ENCODE measurements at regions of chr15 and their contacts with region 1.

Region 1: GRCh38 chr15:81265944-81266775 is 57.8 kb downstream of the STARD5 start:
- DNase-seq: peak; percentile 92
- ATAC-seq: peak; percentile 93
- H3K4me3 Mint-ChIP-seq: peak overlapping the region; percentile 53
- H3K27ac Mint-ChIP-seq: peak overlapping the region; percentile 75
- H3K4me1 Mint-ChIP-seq: peaks cover 37% of the 10 kb centered on the region
- H3K27me3 Mint-ChIP-seq: peaks cover 2% of the 10 kb centered on the region

Region 2: DNA sequence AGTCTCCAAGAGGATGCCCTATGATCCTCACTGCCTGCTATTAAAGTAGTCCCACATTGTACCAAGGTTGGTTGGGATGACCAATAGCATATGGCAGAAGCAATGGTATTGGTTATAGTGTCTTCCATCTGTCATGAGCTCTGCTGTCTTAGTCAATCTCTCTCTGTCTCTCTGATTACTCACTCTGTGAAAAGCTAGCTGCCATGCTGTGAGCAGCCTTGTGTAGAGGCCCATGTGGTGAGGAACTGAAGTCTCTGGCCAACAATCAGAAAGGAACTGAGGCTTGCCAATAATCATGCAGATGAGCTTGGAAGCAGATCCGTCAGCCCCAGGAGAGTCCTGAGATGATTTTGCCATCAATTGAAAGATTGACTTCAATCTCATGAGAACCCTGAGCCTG is 192.4 kb before region 1 on chr15:
- CTCF ChIA-PET with region 1: interaction called, 12 read pairs
- POLR2A ChIA-PET with region 1: no interaction called
- intact Hi-C with region 1: no loop called
- DNase-seq: no peak
- ATAC-seq: peak; percentile 71
- H3K4me3 Mint-ChIP-seq: no peak overlapping the region
- H3K27ac Mint-ChIP-seq: no peak overlapping the region
- H3K4me1 Mint-ChIP-seq: no peaks in the 10 kb centered on the region
- H3K27me3 Mint-ChIP-seq: no peaks in the 10 kb centered on the region

Region 3: GRCh38 chr15:81155375-81156218 is 110.6 kb before region 1 on chr15:
- CTCF ChIA-PET with region 1: interaction called, 90 read pairs
- POLR2A ChIA-PET with region 1: interaction called, 3 read pairs
- intact Hi-C with region 1: loop called (anchors 1 kb)
- DNase-seq: peak; percentile 18
- ATAC-seq: peak; percentile 33
- H3K4me3 Mint-ChIP-seq: no peak overlapping the region
- H3K27ac Mint-ChIP-seq: no peak overlapping the region
- H3K4me1 Mint-ChIP-seq: peaks cover 3% of the 10 kb centered on the region
- H3K27me3 Mint-ChIP-seq: peaks cover 7% of the 10 kb centered on the region

Region 4: GRCh38 chr15:81254277-81254915 is 11.8 kb before region 1 on chr15:
- CTCF ChIA-PET with region 1: interaction called, 29 read pairs
- POLR2A ChIA-PET with region 1: no interaction called
- intact Hi-C with region 1: no loop called
- DNase-seq: no peak
- ATAC-seq: no peak
- H3K4me3 Mint-ChIP-seq: no peak overlapping the region
- H3K27ac Mint-ChIP-seq: no peak overlapping the region
- H3K4me1 Mint-ChIP-seq: no peaks in the 10 kb centered on the region
- H3K27me3 Mint-ChIP-seq: peaks cover 14% of the 10 kb centered on the region

Region 5: DNA sequence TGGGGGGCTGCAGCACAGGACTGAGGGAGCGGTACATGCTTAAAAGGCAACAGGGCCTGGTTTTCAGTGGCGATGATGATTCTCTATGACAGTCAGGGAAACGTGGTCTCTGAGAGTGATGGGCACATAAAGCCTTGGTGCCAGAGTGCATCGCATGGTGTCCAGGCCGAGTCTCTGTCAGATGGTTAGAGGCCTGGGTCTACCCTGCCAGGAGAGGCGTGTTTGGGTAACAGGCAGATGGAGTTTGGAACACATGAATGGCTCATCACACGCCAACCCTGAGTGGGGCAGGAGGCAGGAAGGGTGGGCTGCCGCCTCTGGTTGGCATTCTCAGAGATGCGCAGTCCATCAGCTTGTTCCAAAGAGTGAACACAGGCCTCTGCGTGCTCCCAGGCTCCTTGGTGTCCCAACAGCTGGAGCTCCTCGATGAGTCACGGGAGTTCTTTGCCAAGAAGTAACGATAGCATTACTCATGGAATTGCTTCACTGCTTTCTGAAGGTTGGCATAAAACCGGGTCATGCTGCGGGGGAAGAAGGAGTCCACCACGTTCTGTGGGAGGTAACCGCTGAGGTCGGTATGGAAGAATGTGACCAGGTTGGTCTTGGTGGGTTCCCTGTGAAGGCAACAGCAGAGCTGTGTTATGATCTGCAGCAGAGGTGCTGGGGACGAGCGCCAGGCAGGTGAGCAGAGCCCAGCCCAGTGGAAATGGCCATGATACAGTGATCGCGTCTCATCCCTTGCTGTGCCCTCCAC is 46.8 kb after region 1 on chr15:
- CTCF ChIA-PET with region 1: interaction called, 18 read pairs
- POLR2A ChIA-PET with region 1: no interaction called
- intact Hi-C with region 1: no loop called
- DNase-seq: no peak
- ATAC-seq: no peak
- H3K4me3 Mint-ChIP-seq: no peak overlapping the region
- H3K27ac Mint-ChIP-seq: peak overlapping the region; percentile 44
- H3K4me1 Mint-ChIP-seq: peaks cover 67% of the 10 kb centered on the region
- H3K27me3 Mint-ChIP-seq: no peaks in the 10 kb centered on the region

Region 6: DNA sequence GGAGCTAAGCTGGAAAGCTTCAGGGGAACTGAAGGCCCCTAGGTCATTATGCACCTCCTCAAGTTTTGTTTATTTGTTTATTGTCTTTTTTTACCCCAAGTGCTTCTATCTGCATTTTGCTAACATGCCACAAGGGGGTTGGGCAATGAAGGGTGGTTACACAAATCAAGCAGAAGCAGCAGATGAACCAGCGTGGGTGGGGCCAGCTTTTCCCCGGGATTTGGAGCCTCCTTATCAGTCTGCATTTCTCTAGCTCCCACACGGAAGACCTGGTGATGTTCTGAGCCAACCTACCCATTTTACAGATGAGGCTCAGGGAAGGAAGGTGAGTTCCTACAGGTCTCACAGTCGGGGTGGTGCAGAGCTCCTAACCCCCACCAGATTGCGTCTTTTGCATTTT is 91.1 kb after region 1 on chr15:
- CTCF ChIA-PET with region 1: interaction called, 18 read pairs
- POLR2A ChIA-PET with region 1: no interaction called
- intact Hi-C with region 1: no loop called
- DNase-seq: no peak
- ATAC-seq: no peak
- H3K4me3 Mint-ChIP-seq: no peak overlapping the region
- H3K27ac Mint-ChIP-seq: no peak overlapping the region
- H3K4me1 Mint-ChIP-seq: no peaks in the 10 kb centered on the region
- H3K27me3 Mint-ChIP-seq: no peaks in the 10 kb centered on the region

Region 7: GRCh38 chr15:81410318-81410753 is 144.2 kb after region 1 on chr15:
- CTCF ChIA-PET with region 1: interaction called, 14 read pairs
- POLR2A ChIA-PET with region 1: no interaction called
- intact Hi-C with region 1: no loop called
- DNase-seq: peak; percentile 24
- ATAC-seq: peak; percentile 69
- H3K4me3 Mint-ChIP-seq: no peak overlapping the region
- H3K27ac Mint-ChIP-seq: no peak overlapping the region
- H3K4me1 Mint-ChIP-seq: peaks cover 14% of the 10 kb centered on the region
- H3K27me3 Mint-ChIP-seq: no peaks in the 10 kb centered on the region

Region 8: GRCh38 chr15:81475471-81475870 is 209.3 kb after region 1 on chr15:
- CTCF ChIA-PET with region 1: no interaction called
- POLR2A ChIA-PET with region 1: no interaction called
- intact Hi-C with region 1: no loop called
- DNase-seq: no peak
- ATAC-seq: no peak
- H3K4me3 Mint-ChIP-seq: no peak overlapping the region
- H3K27ac Mint-ChIP-seq: no peak overlapping the region
- H3K4me1 Mint-ChIP-seq: no peaks in the 10 kb centered on the region
- H3K27me3 Mint-ChIP-seq: peaks cover 3% of the 10 kb centered on the region

Region 9: DNA sequence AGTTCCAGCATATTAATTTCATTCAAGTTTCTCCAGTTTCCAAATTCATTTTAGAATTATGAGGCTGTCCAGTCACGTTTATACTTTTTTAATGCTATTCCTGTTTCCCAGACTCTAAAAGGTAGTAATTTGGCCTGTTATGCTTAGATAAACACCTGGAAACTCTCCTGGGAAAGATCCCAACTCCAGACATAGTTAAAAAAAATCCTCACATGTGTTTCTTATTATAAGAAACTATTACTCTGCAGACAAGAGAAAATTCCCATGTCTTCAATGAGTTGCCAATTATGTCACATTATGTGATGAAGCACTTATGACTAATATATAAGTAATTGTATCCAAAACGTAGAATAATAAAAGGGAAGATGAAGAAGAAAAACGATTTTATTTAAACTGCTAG is 245.0 kb after region 1 on chr15:
- CTCF ChIA-PET with region 1: no interaction called
- POLR2A ChIA-PET with region 1: no interaction called
- intact Hi-C with region 1: no loop called
- DNase-seq: no peak
- ATAC-seq: no peak
- H3K4me3 Mint-ChIP-seq: no peak overlapping the region
- H3K27ac Mint-ChIP-seq: no peak overlapping the region
- H3K4me1 Mint-ChIP-seq: no peaks in the 10 kb centered on the region
- H3K27me3 Mint-ChIP-seq: peaks cover 3% of the 10 kb centered on the region